Activated naive CD4-positive, alpha-beta T cell treated with anti-CD3 and anti-CD28 coated beads for 36 hours (primary cell): ENCODE measurements at regions of chr10 and their contacts with region 1.

Region 1: DNA sequence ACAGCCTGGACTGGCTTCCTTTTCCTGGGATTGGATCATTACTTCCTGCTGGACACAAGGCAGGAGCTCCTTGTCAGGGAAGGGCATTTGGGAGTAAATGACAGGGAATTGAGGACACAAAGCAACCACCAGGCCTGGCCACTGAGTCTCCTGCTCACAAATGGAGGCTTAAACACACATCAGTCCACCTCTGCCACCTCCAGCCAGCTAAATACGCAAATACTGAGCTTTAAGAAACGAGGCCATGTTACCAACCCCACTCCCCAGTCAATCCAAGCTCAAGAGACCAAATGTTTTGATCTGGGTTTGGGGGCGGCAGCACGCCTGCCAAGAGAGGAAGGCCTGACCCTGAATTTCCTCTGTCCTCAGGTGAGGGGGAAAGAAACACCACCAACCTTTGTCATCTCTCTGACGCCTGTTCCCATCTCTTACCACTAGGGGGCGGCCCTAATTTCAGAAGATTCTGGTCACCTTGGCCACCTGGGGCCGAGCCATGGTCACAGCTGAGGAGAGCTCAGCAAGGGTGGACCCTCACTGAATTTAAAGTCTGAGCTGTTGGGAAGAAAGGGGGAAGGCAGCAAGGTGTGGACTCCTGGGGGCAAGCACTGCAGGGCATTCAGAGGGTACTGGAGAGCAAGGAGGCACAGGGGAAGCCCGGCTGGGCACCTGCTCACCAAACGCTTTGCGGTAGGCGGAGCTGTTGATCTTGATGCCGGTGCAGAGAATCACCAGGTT is 16.5 kb downstream of the AIFM2 start:
- DNase-seq: peak; percentile 70
- H3K4me3 Mint-ChIP-seq: no peak overlapping the region
- H3K27ac Mint-ChIP-seq: no peak overlapping the region
- H3K4me1 Mint-ChIP-seq: peaks cover 6% of the 10 kb centered on the region
- H3K27me3 Mint-ChIP-seq: no peaks in the 10 kb centered on the region

Region 2: DNA sequence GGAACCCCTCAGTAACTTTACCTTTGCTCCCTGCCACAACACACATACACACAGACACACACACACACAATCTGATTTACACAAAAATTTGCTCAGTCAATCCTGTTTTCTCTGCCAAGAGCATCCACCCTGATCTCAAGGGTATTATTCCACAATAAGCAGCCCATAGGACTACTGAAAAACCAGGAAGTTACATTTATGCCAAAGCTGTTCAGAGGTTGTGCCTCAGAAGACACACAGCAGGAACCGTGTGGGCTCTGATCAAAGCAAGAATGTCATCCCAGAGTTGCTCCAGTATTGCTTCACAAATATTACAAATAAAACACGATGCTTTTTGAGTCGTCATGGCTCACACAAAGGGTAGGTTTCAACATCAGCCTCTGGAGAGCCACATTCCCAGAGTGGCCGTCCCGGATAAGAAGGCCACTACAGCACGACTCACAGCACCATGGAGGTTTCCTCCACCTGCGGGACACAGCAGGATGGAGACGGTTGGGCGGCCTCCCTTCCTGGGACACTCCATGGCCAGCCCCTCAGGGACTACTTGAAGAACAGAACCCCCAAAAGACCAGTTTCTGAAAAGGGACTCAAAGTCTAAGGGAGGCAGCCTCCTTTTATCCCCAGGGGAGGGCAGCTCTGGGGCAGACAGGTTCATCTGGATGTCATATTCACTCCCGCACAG is 14.9 kb after region 1 on chr10:
- CTCF ChIA-PET with region 1: interaction called, 22 read pairs
- intact Hi-C with region 1: no loop called
- DNase-seq: no peak
- H3K4me3 Mint-ChIP-seq: no peak overlapping the region
- H3K27ac Mint-ChIP-seq: no peak overlapping the region
- H3K4me1 Mint-ChIP-seq: peaks cover 15% of the 10 kb centered on the region
- H3K27me3 Mint-ChIP-seq: peaks cover 3% of the 10 kb centered on the region

Region 3: DNA sequence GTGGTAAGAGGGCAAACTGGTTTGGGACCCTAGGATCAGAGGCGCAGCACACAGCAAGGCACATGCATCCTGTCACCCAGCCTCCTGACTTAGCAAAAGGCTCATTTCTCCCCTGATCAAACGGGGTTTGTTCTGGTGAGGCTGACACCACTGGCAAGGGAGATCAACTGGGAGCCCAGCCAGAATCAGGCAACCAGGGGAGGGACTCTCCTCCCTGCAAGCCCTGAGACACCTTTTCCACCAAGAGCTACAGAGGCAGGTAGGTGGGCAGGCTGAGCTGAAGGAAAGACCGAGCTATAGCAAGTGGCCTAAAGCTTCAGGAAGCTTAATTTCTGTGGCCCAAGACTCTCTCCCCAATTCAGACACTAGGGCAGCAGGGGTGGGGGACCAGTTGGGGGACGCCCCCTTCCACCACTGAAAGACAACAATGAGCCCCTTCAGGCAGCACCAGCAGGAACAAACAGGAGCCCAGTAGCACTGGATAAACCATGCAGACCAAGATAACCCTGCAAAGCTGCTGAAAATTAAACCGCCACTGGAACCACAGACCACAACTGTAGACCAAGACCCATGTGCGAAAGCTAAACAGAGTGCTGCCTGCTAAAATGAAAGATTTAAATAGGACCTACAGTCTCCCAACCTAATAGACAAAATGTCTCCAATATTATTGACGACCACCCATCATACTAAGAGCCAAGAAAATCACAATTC is 81.3 kb after region 1 on chr10:
- CTCF ChIA-PET with region 1: interaction called, 17 read pairs
- intact Hi-C with region 1: no loop called
- DNase-seq: no peak
- H3K4me3 Mint-ChIP-seq: no peak overlapping the region
- H3K27ac Mint-ChIP-seq: no peak overlapping the region
- H3K4me1 Mint-ChIP-seq: peaks cover 15% of the 10 kb centered on the region
- H3K27me3 Mint-ChIP-seq: no peaks in the 10 kb centered on the region